Activated CD4-positive, alpha-beta memory T cell treated with anti-CD3 and anti-CD28 coated beads for 36 hours (primary cell): ENCODE measurements at regions of chr9 and their contacts with region 1.

Region 1: GRCh38 chr9:129610473-129611301 is 10.2 kb downstream of the C9orf50 start:
- DNase-seq: peak; percentile 84
- H3K4me3 Mint-ChIP-seq: peak overlapping the region; percentile 69
- H3K27ac Mint-ChIP-seq: peak overlapping the region; percentile 54
- H3K4me1 Mint-ChIP-seq: peaks cover 31% of the 10 kb centered on the region
- H3K27me3 Mint-ChIP-seq: peaks cover 2% of the 10 kb centered on the region

Region 2: DNA sequence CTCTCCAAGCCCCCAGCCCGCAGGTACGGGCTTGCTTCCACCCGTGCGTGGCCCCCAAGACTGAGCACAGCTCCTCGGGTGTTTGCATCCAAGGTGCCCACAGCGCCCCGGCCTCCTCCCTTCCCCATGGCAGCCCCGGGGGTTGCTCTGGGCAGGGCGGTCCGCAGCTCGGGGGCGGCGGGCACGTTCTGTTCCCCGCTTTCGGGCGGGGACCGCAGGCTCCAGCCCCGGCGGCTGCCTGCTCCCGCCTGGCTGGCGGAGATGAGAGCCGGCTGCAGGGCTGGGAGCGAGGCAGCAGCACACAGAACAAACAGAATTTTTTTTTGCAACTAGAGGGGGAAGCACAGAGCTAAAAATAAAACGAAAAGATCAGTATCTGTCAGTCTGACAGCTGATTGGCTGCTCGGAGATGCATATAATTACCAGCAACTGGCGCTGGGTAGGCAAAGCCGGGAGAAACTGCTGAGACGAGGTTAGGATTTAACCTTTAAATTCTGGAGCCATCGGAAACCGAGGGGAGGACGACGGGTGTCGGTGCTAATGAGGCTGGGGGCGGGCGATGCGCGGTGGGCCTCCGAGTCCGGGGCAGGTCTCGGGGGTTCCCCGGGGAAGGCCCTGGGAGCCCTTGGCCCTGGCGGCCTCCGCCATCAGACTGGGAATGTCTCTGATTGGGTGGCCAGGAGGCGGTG is 290.0 kb before region 1 on chr9:
- CTCF ChIA-PET with region 1: interaction called, 3 read pairs
- POLR2A ChIA-PET with region 1: no interaction called
- intact Hi-C with region 1: loop called (anchors 5 kb)
- DNase-seq: peak; percentile 63
- H3K4me3 Mint-ChIP-seq: peak overlapping the region; percentile 57
- H3K27ac Mint-ChIP-seq: no peak overlapping the region
- H3K4me1 Mint-ChIP-seq: peaks cover 12% of the 10 kb centered on the region
- H3K27me3 Mint-ChIP-seq: no peaks in the 10 kb centered on the region

Region 3: DNA sequence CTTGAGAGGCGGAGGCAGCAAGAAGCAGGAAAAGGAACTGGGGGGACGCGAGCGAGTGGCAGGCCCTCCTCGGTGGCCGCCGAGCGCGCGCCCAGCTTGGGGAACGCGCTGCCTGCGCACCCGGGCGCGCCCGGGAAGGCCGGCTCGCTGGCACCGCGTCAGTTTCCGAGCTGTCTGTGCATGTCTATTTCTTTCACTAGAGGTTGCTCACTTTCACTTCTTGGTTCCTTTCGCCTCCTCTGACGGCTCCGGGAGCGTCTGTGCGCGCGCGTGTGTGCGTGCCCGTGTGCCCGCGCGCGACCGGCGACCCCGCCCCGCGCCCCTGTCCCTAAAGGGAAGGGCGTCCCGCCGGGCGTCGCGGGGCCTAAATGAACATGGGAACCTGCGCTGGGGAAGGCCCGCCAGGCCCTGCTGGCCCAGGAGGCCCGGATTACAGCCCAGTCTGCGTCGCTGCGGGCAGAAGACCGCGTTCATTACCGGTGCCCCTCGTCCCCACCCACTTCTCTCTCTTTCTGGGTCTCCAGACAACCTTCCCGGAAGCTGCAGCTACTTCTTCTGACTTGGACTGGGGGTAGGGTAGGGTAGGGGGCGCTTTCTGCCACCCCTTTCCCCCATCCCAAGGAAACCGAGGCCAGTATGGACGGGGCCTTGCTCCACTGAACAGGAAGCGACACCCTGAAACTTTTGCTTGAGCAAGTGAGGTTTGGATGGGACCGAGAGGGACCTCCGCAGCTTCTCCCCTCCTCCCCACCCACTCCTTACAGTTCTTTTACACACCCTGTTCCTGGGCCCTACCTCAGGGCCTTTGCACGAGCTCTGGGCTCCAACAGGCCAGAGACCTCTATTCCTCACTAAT is 226.9 kb before region 1 on chr9:
- CTCF ChIA-PET with region 1: no interaction called
- POLR2A ChIA-PET with region 1: no interaction called
- intact Hi-C with region 1: loop called (anchors 10 kb)
- DNase-seq: peak; percentile 74
- H3K4me3 Mint-ChIP-seq: peak overlapping the region; percentile 61
- H3K27ac Mint-ChIP-seq: peak overlapping the region; percentile 23
- H3K4me1 Mint-ChIP-seq: no peaks in the 10 kb centered on the region
- H3K27me3 Mint-ChIP-seq: no peaks in the 10 kb centered on the region

Region 4: DNA sequence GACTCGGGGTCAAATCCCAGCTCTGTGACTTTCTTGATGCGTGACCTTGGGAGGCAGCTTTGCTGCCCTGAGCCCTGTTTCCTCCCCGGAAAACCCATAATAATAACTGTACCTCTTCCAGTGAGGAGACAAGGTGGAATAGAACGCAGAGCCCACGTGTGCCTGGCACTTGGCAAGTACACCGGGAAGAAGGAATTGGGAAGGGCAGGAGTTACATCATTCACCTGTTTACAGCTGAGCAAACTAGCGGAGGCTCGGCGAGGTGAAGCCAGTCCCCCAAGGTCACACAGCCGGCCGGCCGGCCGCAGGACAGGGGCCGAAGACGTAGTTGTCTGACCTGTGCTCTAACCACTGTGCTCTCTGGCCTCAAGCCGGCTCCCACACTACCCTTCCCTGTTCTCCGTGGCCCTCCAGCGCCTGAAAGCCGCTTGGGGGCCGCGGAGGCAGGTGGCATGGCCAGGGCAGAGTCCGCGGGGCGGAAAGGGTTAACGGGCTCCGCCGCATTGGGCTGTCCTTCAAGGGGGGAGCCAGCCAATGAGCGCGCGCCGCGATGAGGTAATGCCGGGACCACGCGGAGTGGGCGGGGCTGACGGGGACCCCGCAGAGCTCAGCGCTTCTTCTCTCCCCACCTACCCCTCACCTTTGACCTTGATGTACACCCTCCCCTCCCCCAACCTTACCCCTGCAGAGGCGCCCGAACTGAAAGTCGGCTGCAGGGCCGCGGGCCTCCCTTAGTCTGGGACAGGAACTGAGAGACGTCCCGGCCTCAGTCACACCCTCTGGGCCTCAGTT is 115.0 kb before region 1 on chr9:
- CTCF ChIA-PET with region 1: no interaction called
- POLR2A ChIA-PET with region 1: no interaction called
- intact Hi-C with region 1: loop called (anchors 5 kb)
- DNase-seq: peak; percentile 91
- H3K4me3 Mint-ChIP-seq: peak overlapping the region; percentile 72
- H3K27ac Mint-ChIP-seq: peak overlapping the region; percentile 73
- H3K4me1 Mint-ChIP-seq: peaks cover 42% of the 10 kb centered on the region
- H3K27me3 Mint-ChIP-seq: no peaks in the 10 kb centered on the region

Region 5: DNA sequence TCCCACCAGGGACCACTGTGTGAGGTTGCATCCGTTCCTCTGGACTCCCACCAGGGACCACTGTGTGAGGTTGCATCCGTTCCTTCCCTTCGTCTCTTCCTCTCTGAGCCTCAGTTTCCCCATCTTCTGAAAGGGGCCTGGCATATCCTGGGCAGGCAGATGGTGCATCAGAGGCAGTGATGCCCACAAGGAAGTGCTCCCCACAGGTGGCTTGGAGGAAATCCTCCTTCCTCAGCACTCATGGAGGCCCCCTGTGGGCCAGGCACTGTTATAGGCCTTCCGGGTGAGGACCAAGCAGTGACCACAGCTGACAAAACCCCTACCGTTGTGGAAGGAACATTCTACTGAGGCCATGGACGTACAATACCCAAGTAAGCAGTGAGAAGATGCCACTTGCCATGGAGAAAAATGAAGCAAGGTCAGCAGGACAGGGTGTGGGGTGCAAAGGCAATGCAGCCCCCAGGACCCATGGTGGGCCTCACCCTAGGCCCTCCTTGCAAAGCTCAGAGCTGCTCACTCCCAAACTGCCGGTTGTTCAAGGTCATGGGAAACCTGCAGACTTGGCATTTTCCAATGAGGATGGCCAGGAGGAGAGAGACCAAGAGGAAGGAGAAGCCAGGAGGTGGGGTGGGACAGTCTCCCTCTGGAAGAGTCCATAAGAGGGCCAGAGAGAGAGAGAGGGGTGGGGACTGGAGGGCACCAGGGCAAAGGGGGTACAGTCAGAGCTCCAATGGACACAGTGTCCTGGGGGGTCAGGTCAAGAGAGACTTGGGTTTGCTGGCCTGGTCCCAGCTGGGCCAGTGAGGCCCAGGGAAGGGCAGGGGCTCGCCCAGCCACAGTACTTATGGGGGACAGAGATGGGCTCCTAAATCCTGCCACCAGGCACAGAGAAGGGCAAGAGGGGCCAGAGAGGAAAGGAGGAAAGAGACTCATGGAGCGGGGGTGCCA is 40.9 kb before region 1 on chr9:
- CTCF ChIA-PET with region 1: no interaction called
- POLR2A ChIA-PET with region 1: no interaction called
- intact Hi-C with region 1: no loop called
- DNase-seq: no peak
- H3K4me3 Mint-ChIP-seq: peak overlapping the region; percentile 54
- H3K27ac Mint-ChIP-seq: no peak overlapping the region
- H3K4me1 Mint-ChIP-seq: peaks cover 24% of the 10 kb centered on the region
- H3K27me3 Mint-ChIP-seq: peaks cover 20% of the 10 kb centered on the region

Region 6: GRCh38 chr9:129626079-129626624 is 15.5 kb after region 1 on chr9 and contains the start of gene NTMT1:
- CTCF ChIA-PET with region 1: interaction called, 47 read pairs
- POLR2A ChIA-PET with region 1: interaction called, 4 read pairs
- intact Hi-C with region 1: loop called (anchors 1 kb)
- DNase-seq: peak; percentile 95
- H3K4me3 Mint-ChIP-seq: peak within 1 kb of the TSS; percentile 77
- H3K27ac Mint-ChIP-seq: peak within 1 kb of the TSS; percentile 91
- H3K4me1 Mint-ChIP-seq: peaks cover 58% of the 10 kb centered on the region
- H3K27me3 Mint-ChIP-seq: peaks cover 9% of the 10 kb centered on the region
- total RNA-seq, gene NTMT1: 59.9 to 64.6 TPM